Activated naive CD4-positive, alpha-beta T cell treated with anti-CD3 and anti-CD28 coated beads for 36 hours (primary cell): ENCODE measurements at regions of chr19 and their contacts with region 1.

Region 1: DNA sequence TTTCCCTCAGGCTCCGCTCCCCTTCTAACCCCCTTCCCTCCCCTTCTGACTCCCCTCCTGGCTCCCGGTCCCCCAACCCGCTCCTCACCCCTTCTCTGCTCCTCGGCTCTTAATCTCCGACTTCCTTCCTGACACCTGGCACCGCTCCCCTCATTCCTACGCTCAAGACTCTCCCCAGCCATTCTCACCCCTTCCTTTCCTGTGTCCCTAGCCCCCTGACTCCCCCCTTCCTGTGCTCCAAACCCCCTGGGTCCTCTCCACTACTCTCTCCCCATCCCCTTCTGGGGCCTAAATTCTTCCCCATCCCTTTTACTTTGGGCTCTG is 658 bp downstream of the CLPP start:
- DNase-seq: no peak
- H3K4me3 Mint-ChIP-seq: peak overlapping the region; percentile 98
- H3K27ac Mint-ChIP-seq: peak overlapping the region; percentile 95
- H3K4me1 Mint-ChIP-seq: peaks cover 17% of the 10 kb centered on the region
- H3K27me3 Mint-ChIP-seq: no peaks in the 10 kb centered on the region

Region 2: GRCh38 chr19:6125571-6125989 is 236.4 kb before region 1 on chr19:
- CTCF ChIA-PET with region 1: no interaction called
- intact Hi-C with region 1: no loop called
- DNase-seq: peak; percentile 76
- H3K4me3 Mint-ChIP-seq: no peak overlapping the region
- H3K27ac Mint-ChIP-seq: no peak overlapping the region
- H3K4me1 Mint-ChIP-seq: no peaks in the 10 kb centered on the region
- H3K27me3 Mint-ChIP-seq: no peaks in the 10 kb centered on the region

Region 3: GRCh38 chr19:6201996-6202395 is 160.0 kb before region 1 on chr19:
- CTCF ChIA-PET with region 1: no interaction called
- intact Hi-C with region 1: no loop called
- DNase-seq: no peak
- H3K4me3 Mint-ChIP-seq: no peak overlapping the region
- H3K27ac Mint-ChIP-seq: no peak overlapping the region
- H3K4me1 Mint-ChIP-seq: peaks cover 12% of the 10 kb centered on the region
- H3K27me3 Mint-ChIP-seq: no peaks in the 10 kb centered on the region

Region 4: GRCh38 chr19:6393074-6393983 is 31.3 kb after region 1 on chr19 and contains the start of gene GTF2F1:
- CTCF ChIA-PET with region 1: no interaction called
- intact Hi-C with region 1: loop called (anchors 1 kb)
- DNase-seq: peak; percentile 95
- H3K4me3 Mint-ChIP-seq: peak within 1 kb of the TSS; percentile 88
- H3K27ac Mint-ChIP-seq: peak within 1 kb of the TSS; percentile 92
- H3K4me1 Mint-ChIP-seq: peaks cover 16% of the 10 kb centered on the region
- H3K27me3 Mint-ChIP-seq: no peaks in the 10 kb centered on the region
- total RNA-seq, gene GTF2F1: 53.5 to 63.0 TPM

Region 5: DNA sequence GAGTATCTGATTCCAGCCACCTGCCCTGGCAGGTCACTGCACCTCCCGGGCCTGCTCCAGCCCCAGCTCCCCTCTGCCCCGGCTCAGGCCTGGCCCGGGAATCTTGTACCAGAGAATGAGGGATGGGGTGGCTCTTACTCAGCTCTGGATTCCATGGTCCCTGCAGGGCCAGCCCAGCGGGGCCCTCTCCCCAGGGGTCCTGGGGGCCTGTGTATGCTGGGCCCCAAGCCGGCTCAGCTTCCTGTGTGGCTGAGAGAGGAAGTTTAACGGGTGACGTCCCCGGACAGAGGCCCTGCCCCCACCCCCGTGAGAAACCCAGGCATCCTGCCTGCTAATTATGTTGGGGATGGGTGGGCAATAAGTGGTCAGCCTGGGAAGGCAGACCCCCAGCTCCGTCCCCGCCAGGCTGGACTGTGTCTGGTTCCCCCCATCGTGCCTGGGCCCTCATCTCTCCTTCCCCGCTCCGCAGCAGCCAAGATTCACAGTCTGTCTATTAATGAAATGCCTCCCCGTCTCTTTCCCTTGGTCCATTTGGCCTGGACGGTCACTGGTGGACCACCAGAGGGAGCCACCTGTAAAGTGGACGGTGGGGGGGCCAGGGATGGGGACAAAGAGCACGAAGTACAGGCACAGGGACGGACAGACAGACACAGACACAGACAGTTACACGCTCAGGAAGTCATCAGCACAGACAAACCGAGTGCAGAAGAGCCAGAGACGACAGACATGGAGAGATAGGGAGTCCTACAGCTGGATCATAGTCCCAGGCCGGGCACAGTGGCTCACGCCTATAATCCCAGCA is 119.8 kb after region 1 on chr19 and contains the start of gene DENND1C:
- CTCF ChIA-PET with region 1: no interaction called
- intact Hi-C with region 1: loop called (anchors 5 kb)
- DNase-seq: peak; percentile 86
- H3K4me3 Mint-ChIP-seq: peak within 1 kb of the TSS; percentile 95
- H3K27ac Mint-ChIP-seq: peak within 1 kb of the TSS; percentile 94
- H3K4me1 Mint-ChIP-seq: peaks cover 31% of the 10 kb centered on the region
- H3K27me3 Mint-ChIP-seq: no peaks in the 10 kb centered on the region
- total RNA-seq, gene DENND1C: 55.7 to 57.9 TPM